ENCODE measurements at regions of chr5 and their contacts with region 1.

Region 1: DNA sequence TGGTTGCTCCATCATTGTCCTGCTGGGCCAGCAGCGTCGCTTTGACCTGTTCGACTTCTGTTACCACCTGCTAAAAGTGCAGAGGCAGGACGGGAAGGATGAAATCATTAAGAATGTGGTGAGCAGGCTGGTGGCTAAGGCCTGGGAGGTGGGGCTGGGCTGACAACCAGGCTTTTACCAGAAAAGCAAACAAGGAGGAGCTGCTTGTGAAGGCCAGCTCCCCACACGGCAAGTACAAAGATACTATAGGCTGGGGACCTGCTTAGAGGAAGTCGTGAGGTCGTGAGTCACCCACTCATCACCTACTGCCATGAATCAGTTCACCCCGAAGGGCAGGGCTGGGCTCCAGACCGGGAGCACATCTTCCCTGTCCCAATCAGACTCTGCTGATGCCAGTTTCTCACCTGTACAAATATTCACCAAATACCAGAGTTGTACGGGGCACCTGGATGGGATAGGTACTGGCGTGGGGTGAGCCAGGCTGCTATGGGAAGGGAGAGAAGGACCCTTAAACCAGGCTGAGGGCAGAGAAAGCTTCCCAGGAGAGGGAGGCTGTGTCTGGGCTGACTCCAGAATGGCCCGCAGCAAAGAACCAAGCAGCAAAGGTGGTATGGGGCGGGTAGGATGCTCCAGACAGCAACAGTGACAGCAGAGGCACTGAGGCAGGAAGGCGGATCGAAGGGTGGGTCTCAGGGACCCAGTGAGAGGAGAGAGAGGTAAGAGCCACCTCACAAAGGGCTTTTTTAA is 69.3 kb upstream of the NIPAL4 start:
- DNase-seq: peak; percentile 40
- H3K4me3 ChIP-seq: no peak overlapping the region
- H3K27ac ChIP-seq: peak overlapping the region; percentile 19
- H3K4me1 ChIP-seq: peaks cover 43% of the 10 kb centered on the region
- H3K27me3 ChIP-seq: no peaks in the 10 kb centered on the region
- CTCF ChIP-seq: no peak
- POLR2A ChIP-seq: no peak

Region 2: DNA sequence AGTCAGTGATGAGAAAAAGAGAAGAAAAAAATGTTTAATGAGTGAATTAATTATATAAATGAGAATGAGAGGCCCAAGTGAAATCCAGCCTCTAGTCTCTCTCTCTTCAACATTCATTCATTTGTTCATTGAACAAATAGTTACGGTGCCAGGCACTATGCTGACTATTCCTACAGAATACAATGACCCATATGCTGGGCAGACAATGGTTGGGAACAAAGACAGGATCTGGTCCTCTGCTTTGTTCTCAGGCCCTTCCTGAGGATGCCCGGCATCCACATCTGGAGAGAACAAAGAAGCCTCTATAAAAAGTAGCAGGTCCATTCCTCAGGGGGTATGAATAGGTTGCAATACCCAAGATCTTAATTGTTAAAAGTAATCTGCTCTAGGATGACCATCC is 178.0 kb after region 1 on chr5:
- CTCF ChIA-PET with region 1: interaction called, 3 read pairs
- POLR2A ChIA-PET with region 1: no interaction called
- dilution Hi-C with region 1: no loop called
- intact Hi-C with region 1: loop called (anchors 1 kb)
- DNase-seq: peak; percentile 34
- H3K4me3 ChIP-seq: no peak overlapping the region
- H3K27ac ChIP-seq: no peak overlapping the region
- H3K4me1 ChIP-seq: peaks cover 13% of the 10 kb centered on the region
- H3K27me3 ChIP-seq: no peaks in the 10 kb centered on the region
- CTCF ChIP-seq: no peak
- POLR2A ChIP-seq: no peak